Motor neuron (in vitro differentiated cells): ENCODE measurements at regions of chr14 and their contacts with region 1.

Region 1: GRCh38 chr14:59028476-59029202 is 159.8 kb upstream of the DAAM1 start:
- ATAC-seq: peak; percentile 97 to 100 (median 99)
- H3K4me3 ChIP-seq: no peak overlapping the region
- H3K27ac ChIP-seq: no peak overlapping the region
- H3K4me1 ChIP-seq: peaks cover 5 to 9% of the 10 kb centered on the region in 2 donors

Region 2: GRCh38 chr14:59245809-59246295 is 217.2 kb after region 1 on chr14:
- in situ Hi-C with region 1: no loop called
- ATAC-seq: no peak
- H3K4me3 ChIP-seq: no peak overlapping the region
- H3K27ac ChIP-seq: no peak overlapping the region
- H3K4me1 ChIP-seq: no peaks in the 10 kb centered on the region

Region 3: DNA sequence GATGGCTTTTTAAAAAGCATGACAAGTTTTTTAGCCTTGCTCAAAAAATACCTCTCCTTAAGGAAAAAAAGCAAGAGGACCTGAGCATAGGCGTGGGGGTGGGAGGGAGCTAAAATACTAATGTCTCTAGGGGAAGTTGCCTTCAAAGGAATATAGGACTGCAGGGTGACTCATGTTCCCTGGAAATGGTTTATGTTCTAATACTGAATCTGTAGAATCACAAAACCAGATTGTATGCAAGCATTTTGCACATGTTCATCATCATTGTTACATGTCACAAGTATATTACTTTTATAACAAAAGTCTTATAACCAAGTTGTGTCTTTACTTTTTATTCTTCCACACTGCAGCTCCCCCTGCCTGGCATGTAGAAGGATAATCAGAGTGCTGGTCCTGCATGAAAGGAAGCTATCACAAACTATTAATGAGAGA is 400.0 kb after region 1 on chr14:
- in situ Hi-C with region 1: loop called in 3 of 9 experiments (anchors 25 kb)
- ATAC-seq: peak in 3 of 8 experiments; percentile 8 to 81 (median 24)
- H3K4me3 ChIP-seq: no peak overlapping the region
- H3K27ac ChIP-seq: no peak overlapping the region
- H3K4me1 ChIP-seq: peaks cover 3% of the 10 kb centered on the region in 2 donors